HepG2 (cell line): ENCODE measurements at regions of chr15 and their contacts with region 1.

Region 1: GRCh38 chr15:96225320-96226259 is 104.9 kb upstream of the NR2F2 start:
- DNase-seq: peak; percentile 82
- ATAC-seq: peak; percentile 86
- H3K4me3 ChIP-seq: no peak overlapping the region
- H3K27ac ChIP-seq: no peak overlapping the region
- H3K4me1 ChIP-seq: peaks cover 22% of the 10 kb centered on the region
- H3K27me3 ChIP-seq: no peaks in the 10 kb centered on the region
- CTCF ChIP-seq: no peak
- EP300 ChIP-seq: peak in 1 of 2 experiments; percentile 52; a peak in 1 of 4 replicates
- POLR2A ChIP-seq: no peak
- RAD21 ChIP-seq: no peak

Region 2: DNA sequence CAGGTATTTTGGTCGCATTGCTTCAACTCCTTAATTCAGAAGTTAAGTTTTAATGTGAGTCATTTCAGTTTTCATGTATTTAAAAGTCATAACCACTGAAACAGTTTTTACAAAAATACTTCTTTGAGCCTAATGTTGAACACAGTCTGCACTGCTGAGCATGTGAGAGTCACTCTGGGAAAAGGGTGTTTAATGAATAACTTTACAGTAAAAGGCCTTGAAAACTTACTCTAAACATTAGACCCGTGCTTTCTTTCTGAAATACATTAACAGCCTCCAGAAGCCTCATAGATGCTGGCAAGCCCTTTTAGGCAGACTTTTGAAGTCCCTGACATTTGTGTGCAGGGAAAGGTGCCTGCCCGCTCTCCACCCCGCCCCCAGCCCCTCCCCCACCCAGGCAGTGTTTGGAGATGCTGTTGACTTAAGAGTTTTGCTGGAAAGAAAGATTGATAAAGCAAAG is 36.0 kb after region 1 on chr15:
- CTCF ChIA-PET with region 1: no interaction called
- POLR2A ChIA-PET with region 1: no interaction called
- in situ Hi-C with region 1: no loop called
- intact Hi-C with region 1: loop called (anchors 5 kb)
- DNase-seq: peak; percentile 94
- ATAC-seq: peak; percentile 86
- H3K4me3 ChIP-seq: peak overlapping the region in 2 of 3 experiments; percentile 50 to 54; a peak in 4 of 6 replicates
- H3K27ac ChIP-seq: peak overlapping the region; percentile 87
- H3K4me1 ChIP-seq: peaks cover 85% of the 10 kb centered on the region
- H3K27me3 ChIP-seq: no peaks in the 10 kb centered on the region
- CTCF ChIP-seq: no peak
- EP300 ChIP-seq: peak in 1 of 2 experiments; percentile 81; a peak in 2 of 4 replicates
- POLR2A ChIP-seq: 0 out of 4 replicates have a peak, but pooled peaks of 1 of the 2 experiments have one; percentile 44
- RAD21 ChIP-seq: no peak